PC-9 (cell line): ENCODE measurements at regions of chr22 and their contacts with region 1.

Region 1: DNA sequence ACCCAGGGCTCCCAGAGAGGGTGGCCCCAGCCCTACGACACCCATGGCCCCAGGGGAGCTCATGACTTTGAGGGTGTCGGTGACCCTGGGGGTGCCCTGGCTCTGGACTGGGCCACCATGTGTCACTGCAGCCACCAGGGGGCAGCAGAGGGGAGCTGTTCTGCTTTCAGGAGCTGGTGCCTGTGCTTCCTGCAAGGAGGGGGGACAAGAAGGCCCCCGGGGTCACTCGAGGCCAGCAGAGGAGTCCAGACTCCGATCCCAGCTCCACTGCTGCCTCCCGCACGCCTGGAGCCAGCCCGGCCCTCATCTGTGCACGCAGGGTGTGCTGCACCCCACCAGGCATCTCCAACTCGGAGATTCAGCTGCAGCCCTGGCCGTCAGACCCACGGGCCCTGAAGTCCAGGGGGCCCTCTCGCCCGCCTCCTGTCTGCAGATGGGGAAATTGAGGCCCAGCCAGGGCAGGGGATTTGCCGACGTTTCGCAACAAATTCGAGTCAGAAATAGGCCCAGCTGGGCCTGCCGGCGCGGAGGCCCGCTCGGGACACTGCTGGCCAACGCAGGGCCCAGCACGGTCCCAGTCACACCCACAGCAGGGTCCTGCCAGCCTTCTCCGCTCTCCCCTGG is 29.5 kb upstream of the WNT7B start:
- DNase-seq: peak; percentile 77 to 90
- H3K4me3 ChIP-seq: peak overlapping the region; percentile 61
- H3K27ac ChIP-seq: peak overlapping the region; percentile 73
- H3K4me1 ChIP-seq: peaks cover 26% of the 10 kb centered on the region
- H3K27me3 ChIP-seq: no peaks in the 10 kb centered on the region
- CTCF ChIP-seq: peak; percentile 98

Region 2: GRCh38 chr22:46035742-46036557 is 29.5 kb after region 1 on chr22:
- CTCF ChIA-PET with region 1: interaction called, 28 read pairs
- POLR2A ChIA-PET with region 1: interaction called, 21 read pairs
- intact Hi-C with region 1: loop called (anchors 2 kb)
- DNase-seq: peak; percentile 96 to 99
- H3K4me3 ChIP-seq: peak overlapping the region; percentile 99
- H3K27ac ChIP-seq: peak overlapping the region; percentile 34; the same call in 1 of the 2 replicates
- H3K4me1 ChIP-seq: peaks cover 15% of the 10 kb centered on the region
- H3K27me3 ChIP-seq: no peaks in the 10 kb centered on the region
- CTCF ChIP-seq: no peak

Region 3: GRCh38 chr22:46201059-46201757 is 194.7 kb after region 1 on chr22:
- CTCF ChIA-PET with region 1: interaction called, 13 read pairs
- POLR2A ChIA-PET with region 1: no interaction called
- intact Hi-C with region 1: no loop called
- DNase-seq: no peak
- H3K4me3 ChIP-seq: no peak overlapping the region
- H3K27ac ChIP-seq: no peak overlapping the region
- H3K4me1 ChIP-seq: no peaks in the 10 kb centered on the region
- H3K27me3 ChIP-seq: no peaks in the 10 kb centered on the region
- CTCF ChIP-seq: no peak